Posterior vena cava (tissue), 2 donors: ENCODE measurements at regions of chr9 and their contacts with region 1.

Region 1: DNA sequence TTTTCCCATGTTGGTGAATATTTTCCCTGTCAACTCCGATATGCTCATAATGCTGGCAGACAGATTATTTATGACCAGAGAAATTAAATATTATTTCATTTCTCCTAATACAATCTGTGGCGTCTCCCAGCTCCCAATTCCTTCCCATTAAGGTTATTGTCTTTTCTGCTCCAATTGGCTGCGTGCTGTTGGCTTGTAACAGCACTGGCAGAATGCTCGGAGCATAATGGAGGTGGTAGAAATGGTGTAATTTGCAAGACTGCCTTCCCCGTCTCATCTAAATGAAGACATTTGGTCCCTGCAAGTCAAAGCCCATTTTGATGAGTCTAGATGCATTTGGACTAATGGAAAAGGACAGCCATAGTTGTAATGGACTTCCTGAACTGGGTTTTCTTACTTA is 601.7 kb downstream of the BRINP1 start:
- DNase-seq: no peak

Region 2: GRCh38 chr9:118271936-118272335 is 495.6 kb before region 1 on chr9:
- intact Hi-C with region 1: loop called in 1 of 2 experiments (anchors 5 kb)
- DNase-seq: no peak

Region 3: GRCh38 chr9:118522093-118523028 is 245.2 kb before region 1 on chr9:
- intact Hi-C with region 1: no loop called
- DNase-seq: no peak

Region 4: GRCh38 chr9:119662329-119662728 is 894.8 kb after region 1 on chr9:
- intact Hi-C with region 1: no loop called
- DNase-seq: no peak

Region 5: GRCh38 chr9:119905724-119906123 is 1138.2 kb after region 1 on chr9:
- intact Hi-C with region 1: no loop called
- DNase-seq: no peak